PC-3 (cell line): ENCODE measurements at regions of chr11 and their contacts with region 1.

Region 1: GRCh38 chr11:25981998-25982397 is 349.9 kb upstream of the ANO3 start:
- DNase-seq: peak; percentile 68
- ATAC-seq: peak; percentile 69
- H3K4me3 ChIP-seq: no peak overlapping the region
- H3K27ac ChIP-seq: no peak overlapping the region
- H3K4me1 ChIP-seq: no peaks in the 10 kb centered on the region
- H3K27me3 ChIP-seq: peaks cover 28% of the 10 kb centered on the region
- CTCF ChIP-seq: peak; percentile 68

Region 2: GRCh38 chr11:25317216-25317615 is 664.8 kb before region 1 on chr11:
- CTCF ChIA-PET with region 1: interaction called, 11 read pairs
- POLR2A ChIA-PET with region 1: no interaction called
- intact Hi-C with region 1: no loop called
- DNase-seq: peak; percentile 59
- ATAC-seq: peak; percentile 42
- H3K4me3 ChIP-seq: no peak overlapping the region
- H3K27ac ChIP-seq: no peak overlapping the region
- H3K4me1 ChIP-seq: 0 out of 2 replicates have a peak, but pooled peaks cover 4% of the 10 kb centered on the region
- H3K27me3 ChIP-seq: no peaks in the 10 kb centered on the region
- CTCF ChIP-seq: no peak

Region 3: DNA sequence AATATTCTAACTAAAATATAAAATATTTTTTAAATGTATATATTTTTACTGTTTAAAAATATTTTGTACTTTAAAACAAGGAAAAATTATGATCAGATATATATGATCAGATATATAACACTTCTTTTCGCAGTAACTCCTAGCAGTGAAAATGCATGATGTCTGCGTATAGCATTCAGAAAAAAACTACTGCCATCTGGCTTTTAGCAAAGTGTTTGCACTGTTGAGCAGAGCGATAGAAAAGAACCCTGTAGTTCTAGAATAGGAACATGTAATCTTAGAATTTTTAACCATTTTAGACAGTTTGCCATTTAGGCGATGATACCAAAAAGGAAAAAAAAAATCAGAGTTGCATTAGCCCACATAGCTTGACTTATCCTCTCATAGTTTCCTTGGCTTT is 20.5 kb before region 1 on chr11:
- CTCF ChIA-PET with region 1: no interaction called
- POLR2A ChIA-PET with region 1: no interaction called
- intact Hi-C with region 1: no loop called
- DNase-seq: peak; percentile 4
- ATAC-seq: 0 out of 2 replicates have a peak, but pooled peaks have one; percentile 50
- H3K4me3 ChIP-seq: no peak overlapping the region
- H3K27ac ChIP-seq: no peak overlapping the region
- H3K4me1 ChIP-seq: no peaks in the 10 kb centered on the region
- H3K27me3 ChIP-seq: no peaks in the 10 kb centered on the region
- CTCF ChIP-seq: peak; percentile 29; the same call in 1 of the 2 replicates

Region 4: GRCh38 chr11:26014451-26015115 is 32.6 kb after region 1 on chr11:
- CTCF ChIA-PET with region 1: no interaction called
- POLR2A ChIA-PET with region 1: no interaction called
- intact Hi-C with region 1: no loop called
- DNase-seq: no peak
- ATAC-seq: peak; percentile 38; the same call in 1 of the 2 replicates
- H3K4me3 ChIP-seq: no peak overlapping the region
- H3K27ac ChIP-seq: no peak overlapping the region
- H3K4me1 ChIP-seq: no peaks in the 10 kb centered on the region
- H3K27me3 ChIP-seq: no peaks in the 10 kb centered on the region; the same call in 1 of the 2 replicates
- CTCF ChIP-seq: no peak

Region 5: DNA sequence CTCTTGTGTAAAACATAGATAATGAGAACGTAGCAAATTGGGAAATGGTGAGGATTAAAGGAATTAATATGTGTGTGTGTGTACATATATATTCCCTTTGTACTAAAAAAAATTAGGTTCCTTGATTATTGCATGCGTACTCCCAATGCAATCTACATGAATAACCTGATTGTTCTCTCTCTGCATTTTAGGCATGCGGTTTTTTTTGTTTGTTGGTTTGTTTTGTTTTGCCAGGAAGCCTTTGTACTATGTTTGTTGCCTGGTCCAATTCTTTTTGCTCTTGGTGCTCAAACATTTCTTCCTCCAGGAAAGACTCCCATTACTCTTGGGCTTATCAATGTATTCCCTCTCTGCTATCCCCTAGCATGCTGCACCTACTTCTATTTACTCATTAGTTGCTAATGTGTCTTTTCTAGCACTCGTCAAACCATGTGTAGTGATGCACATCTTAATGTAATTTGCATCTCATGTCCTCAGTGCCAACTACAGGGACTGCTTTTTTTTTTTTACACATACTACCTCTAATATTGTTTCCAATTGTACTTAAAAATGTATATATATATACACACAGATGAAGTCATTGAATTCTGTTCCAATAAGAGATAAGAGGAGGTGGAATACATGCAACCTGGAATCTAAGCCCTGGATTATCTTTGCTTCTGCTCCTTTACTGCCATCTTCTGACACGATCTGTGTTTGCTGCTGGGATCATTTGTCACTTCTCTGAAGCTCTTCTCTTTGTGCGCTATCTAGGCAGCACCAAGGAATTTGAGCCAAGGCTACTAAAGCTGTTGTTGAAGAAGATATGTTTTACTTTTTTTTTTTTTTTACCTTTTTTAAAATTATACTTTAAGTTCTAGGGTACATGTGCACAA is 152.7 kb after region 1 on chr11:
- CTCF ChIA-PET with region 1: interaction called, 8 read pairs
- POLR2A ChIA-PET with region 1: no interaction called
- intact Hi-C with region 1: loop called (anchors 1 kb)
- DNase-seq: peak; percentile 25
- ATAC-seq: peak; percentile 61
- H3K4me3 ChIP-seq: no peak overlapping the region
- H3K27ac ChIP-seq: no peak overlapping the region
- H3K4me1 ChIP-seq: no peaks in the 10 kb centered on the region
- H3K27me3 ChIP-seq: no peaks in the 10 kb centered on the region
- CTCF ChIP-seq: no peak; the same call in 1 of the 2 replicates

Region 6: GRCh38 chr11:26227296-26227695 is 245.3 kb after region 1 on chr11:
- CTCF ChIA-PET with region 1: interaction called, 6 read pairs
- POLR2A ChIA-PET with region 1: no interaction called
- intact Hi-C with region 1: loop called (anchors 1 kb)
- DNase-seq: peak; percentile 81
- ATAC-seq: peak; percentile 79
- H3K4me3 ChIP-seq: no peak overlapping the region
- H3K27ac ChIP-seq: peak overlapping the region; percentile 88
- H3K4me1 ChIP-seq: peaks cover 43% of the 10 kb centered on the region
- H3K27me3 ChIP-seq: no peaks in the 10 kb centered on the region
- CTCF ChIP-seq: peak; percentile 70

Region 7: GRCh38 chr11:26276798-26277424 is 294.9 kb after region 1 on chr11:
- CTCF ChIA-PET with region 1: interaction called, 4 read pairs
- POLR2A ChIA-PET with region 1: no interaction called
- intact Hi-C with region 1: loop called (anchors 1 kb)
- DNase-seq: peak; percentile 79
- ATAC-seq: peak; percentile 68
- H3K4me3 ChIP-seq: no peak overlapping the region
- H3K27ac ChIP-seq: no peak overlapping the region
- H3K4me1 ChIP-seq: no peaks in the 10 kb centered on the region
- H3K27me3 ChIP-seq: 0 out of 2 replicates have a peak, but pooled peaks cover 9% of the 10 kb centered on the region
- CTCF ChIP-seq: peak; percentile 92